ENCODE measurements at regions of chr1 and their contacts with region 1.

Region 1: DNA sequence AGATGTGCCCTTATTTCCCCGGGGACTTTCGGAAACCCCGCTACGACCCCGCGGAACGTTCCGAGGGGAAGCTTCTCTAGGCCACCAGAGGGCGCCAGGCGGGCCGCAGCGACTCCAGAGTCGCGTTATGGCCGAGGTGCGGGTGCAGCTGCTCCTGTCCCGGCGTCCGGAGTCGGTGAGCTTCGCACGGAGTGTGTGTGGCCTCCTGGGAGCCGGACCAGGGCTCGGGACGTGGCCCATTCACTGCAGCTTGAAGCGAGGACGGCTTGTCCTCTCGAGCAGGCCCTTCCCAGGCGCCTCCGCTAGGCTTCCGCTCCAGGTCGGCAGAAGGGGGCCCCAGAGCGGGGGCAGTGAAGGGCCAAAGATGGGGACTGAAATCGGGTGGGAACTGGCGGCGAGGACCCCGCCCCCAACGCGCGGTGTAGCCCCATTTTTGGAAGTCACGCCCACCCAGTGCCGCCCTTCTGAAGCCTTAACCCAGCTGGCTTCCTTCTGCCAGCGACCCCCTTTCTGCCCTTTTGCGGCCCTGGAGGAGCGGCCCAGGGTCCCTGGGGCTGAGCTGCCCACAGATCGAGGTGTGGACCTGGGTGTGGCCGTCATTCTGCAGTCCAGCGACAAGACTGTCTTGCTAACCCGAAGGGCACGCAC is at the start of gene NUDT17:
- DNase-seq: peak; percentile 89
- ATAC-seq: peak; percentile 75
- H3K4me3 Mint-ChIP-seq: no peak within 1 kb of the TSS
- H3K27ac Mint-ChIP-seq: no peak within 1 kb of the TSS
- H3K4me1 Mint-ChIP-seq: peaks cover 7% of the 10 kb centered on the region
- H3K27me3 Mint-ChIP-seq: no peaks in the 10 kb centered on the region
- total RNA-seq, gene NUDT17: 3.7 to 4.0 TPM

Region 2: GRCh38 chr1:145757420-145757819 is 88.2 kb before region 1 on chr1:
- CTCF ChIA-PET with region 1: interaction called, 11 read pairs
- POLR2A ChIA-PET with region 1: no interaction called
- intact Hi-C with region 1: no loop called
- DNase-seq: no peak
- ATAC-seq: no peak
- H3K4me3 Mint-ChIP-seq: no peak overlapping the region
- H3K27ac Mint-ChIP-seq: no peak overlapping the region
- H3K4me1 Mint-ChIP-seq: peaks cover 2% of the 10 kb centered on the region
- H3K27me3 Mint-ChIP-seq: no peaks in the 10 kb centered on the region

Region 3: DNA sequence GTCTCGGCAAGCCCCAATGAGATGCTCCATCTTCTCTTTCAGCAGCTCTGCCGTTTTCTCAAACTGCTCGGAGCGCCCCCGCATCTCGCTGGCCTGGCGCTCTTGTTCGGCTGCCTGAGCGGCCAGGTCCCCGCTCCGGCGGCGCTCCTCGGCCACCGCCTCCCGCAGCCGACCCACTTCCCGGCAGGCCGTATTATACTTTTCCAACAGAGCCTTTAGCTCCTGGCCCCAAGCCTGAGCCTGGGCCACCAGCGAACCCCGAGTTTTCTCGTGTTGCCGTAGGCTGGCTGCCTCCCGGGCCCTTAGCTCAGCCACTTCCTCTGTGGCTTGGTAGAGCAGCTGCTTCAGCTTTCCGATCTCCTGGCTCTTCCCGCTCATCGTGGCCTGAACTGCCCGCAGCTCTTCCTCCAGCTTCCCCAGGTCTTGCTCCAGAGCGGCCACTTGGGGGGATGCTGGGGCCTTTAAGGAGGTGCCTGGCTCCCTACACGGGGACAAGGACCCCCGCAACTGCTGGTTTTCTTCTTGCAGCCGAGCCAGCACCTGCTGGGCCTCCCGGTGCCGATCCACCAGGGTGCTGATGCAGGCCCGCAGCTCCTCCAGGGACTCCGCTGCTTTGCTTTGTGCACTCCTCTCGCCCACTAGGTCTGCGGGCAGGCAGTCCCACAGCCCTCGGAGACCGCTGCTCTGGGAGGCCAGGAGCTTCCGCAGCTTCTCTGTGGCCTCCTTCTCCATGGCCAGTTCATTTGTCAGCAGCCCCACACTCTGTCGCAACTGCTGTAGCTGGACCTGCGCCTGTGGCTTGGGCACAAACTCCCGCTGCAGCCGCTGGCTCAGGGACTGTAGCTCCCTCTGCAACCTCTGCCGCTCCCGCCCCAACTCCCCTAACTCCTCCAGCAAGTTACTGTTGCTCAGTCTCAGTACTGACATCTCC is 26.6 kb after region 1 on chr1:
- CTCF ChIA-PET with region 1: interaction called, 49 read pairs
- POLR2A ChIA-PET with region 1: no interaction called
- intact Hi-C with region 1: no loop called
- DNase-seq: peak; percentile 58
- ATAC-seq: peak; percentile 81
- H3K4me3 Mint-ChIP-seq: peak overlapping the region; percentile 63
- H3K27ac Mint-ChIP-seq: peak overlapping the region; percentile 61
- H3K4me1 Mint-ChIP-seq: peaks cover 11% of the 10 kb centered on the region
- H3K27me3 Mint-ChIP-seq: peaks cover 10% of the 10 kb centered on the region

Region 4: DNA sequence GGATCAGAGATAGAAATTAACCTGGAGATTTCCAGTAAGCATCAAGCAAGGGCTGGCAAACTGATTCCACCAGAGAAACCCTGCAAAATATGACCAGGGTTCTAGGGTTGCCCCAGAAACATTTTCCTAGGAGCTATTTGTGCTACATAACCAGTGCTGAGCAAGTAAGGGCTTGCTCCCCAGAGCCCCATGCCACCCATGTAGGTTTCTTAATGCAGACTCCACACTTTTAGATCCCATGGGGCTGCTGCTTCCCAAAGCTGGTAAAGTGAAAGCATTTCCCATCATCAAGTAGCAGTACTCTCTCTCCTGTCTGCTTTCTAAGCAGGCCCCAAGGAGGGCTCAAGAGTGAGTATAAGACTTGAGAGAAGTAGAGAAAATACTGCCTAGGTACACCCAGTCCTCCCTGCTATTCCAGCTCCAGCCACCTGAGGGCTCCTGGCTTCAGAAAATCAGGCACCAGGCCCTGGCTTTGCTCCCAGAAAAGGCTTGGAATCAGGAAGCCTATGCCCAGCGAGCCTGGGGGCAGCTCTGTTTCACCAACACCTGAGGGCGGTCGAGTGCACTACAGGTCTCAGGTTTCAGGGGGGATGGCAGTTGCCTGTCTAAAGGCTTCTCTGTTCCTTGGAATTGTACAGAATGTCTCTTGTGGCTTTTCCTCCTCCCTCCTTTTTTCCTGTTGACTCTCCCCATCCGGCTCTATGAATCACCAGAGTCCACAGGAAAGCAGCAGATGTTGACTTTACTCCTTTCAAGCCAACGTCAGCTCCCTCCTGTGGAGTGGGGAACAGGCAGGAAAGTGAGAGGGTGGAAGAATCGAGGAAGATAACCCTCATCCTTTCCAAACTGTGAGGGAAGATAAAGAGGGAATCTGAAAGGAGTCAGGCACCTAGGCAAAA is 46.2 kb after region 1 on chr1:
- CTCF ChIA-PET with region 1: interaction called, 14 read pairs
- POLR2A ChIA-PET with region 1: no interaction called
- intact Hi-C with region 1: loop called in 1 of 2 experiments (anchors 5 kb)
- DNase-seq: peak; percentile 74
- ATAC-seq: peak; percentile 78
- H3K4me3 Mint-ChIP-seq: no peak overlapping the region
- H3K27ac Mint-ChIP-seq: no peak overlapping the region
- H3K4me1 Mint-ChIP-seq: no peaks in the 10 kb centered on the region
- H3K27me3 Mint-ChIP-seq: no peaks in the 10 kb centered on the region

Region 5: DNA sequence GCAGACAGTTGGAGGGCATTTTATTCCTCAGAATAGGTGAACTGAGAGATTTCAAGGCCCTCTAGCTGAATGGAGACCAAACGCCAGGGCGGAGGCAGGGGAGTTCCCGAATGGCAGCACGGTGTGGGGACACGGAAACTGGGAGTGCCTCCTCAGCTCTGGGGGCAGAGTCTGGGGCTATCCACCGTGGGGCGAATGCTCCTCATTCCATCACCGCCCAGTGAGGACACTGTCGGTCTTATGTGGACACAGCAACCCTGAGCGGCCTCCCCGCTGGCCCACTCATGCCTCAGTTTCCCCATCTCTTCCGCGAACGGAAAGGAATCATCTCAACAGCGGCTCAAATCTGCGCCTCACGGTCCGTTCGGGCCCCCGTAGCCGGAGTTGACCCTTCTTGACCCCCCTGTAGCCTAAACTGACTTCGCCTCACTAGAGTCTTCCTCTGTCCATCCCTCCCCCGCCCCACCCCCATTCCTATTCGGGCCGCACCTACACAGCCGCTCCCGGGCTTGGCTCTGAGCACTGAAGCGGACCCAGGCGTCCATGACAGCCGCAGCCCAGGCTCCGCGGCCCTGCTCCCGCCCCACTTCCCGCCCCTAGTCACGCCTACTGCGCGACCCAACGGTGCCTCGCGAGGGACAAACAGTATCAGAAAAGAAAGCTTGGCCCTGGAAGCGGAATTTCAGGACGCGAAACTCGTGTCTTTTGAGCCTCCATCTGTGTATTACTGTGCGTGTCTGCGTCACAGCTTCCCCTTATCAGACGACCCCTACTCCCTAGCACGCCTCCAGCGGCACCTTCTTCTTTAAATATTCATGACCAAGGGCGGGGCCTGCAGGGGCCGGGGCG is 72.7 kb after region 1 on chr1 and contains the start of gene PEX11B:
- CTCF ChIA-PET with region 1: interaction called, 11 read pairs
- POLR2A ChIA-PET with region 1: no interaction called
- intact Hi-C with region 1: loop called in 1 of 2 experiments (anchors 5 kb)
- DNase-seq: peak; percentile 94
- ATAC-seq: peak; percentile 89
- H3K4me3 Mint-ChIP-seq: peak within 1 kb of the TSS; percentile 93
- H3K27ac Mint-ChIP-seq: peak within 1 kb of the TSS; percentile 94
- H3K4me1 Mint-ChIP-seq: peaks cover 46% of the 10 kb centered on the region
- H3K27me3 Mint-ChIP-seq: no peaks in the 10 kb centered on the region
- total RNA-seq, gene PEX11B: 22.6 to 26.4 TPM

Region 6: DNA sequence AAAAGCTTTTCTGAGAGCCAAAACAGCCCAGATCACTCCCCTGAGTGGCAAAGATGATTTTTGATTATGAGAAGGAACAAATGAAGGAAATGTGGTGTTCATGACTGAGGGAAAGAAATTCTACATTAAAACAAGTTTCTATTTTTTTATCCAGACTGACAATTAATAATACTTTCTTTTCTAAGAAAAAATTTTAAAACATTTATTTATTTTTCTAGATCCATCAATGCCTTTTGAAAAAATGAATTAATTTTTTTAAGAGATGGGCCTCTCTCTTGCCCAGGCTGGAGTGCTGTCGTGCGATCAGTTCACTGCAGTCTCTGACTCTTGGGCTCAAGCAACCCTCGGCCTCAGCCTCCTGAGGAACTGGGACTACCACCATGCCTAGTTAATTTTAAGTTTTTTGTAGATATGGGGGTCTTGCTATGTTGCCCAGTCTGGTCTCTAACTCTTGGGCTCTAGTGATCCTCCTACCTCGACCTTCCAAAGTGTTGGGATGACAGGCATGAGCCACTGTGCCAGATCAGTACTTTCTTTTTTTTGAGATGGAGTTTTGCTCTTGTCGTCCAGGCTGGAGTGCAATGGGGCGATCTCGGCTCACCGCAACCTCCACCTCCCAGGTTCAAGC is 162.0 kb after region 1 on chr1:
- CTCF ChIA-PET with region 1: interaction called, 12 read pairs
- POLR2A ChIA-PET with region 1: no interaction called
- intact Hi-C with region 1: loop called in 1 of 2 experiments (anchors 1 kb)
- DNase-seq: no peak
- ATAC-seq: no peak
- H3K4me3 Mint-ChIP-seq: peak overlapping the region; percentile 58
- H3K27ac Mint-ChIP-seq: peak overlapping the region; percentile 76
- H3K4me1 Mint-ChIP-seq: peaks cover 38% of the 10 kb centered on the region
- H3K27me3 Mint-ChIP-seq: no peaks in the 10 kb centered on the region

Measured in activated CD4-positive, alpha-beta T cell treated with anti-CD3 and anti-CD28 coated beads for 36 hours (primary cell).